ENCODE measurements at regions of chr19 and their contacts with region 1.

Region 1: GRCh38 chr19:15563325-15563794 is 51.7 kb upstream of the CYP4F8 start:
- DNase-seq: peak; percentile 52 to 70
- ATAC-seq: peak; percentile 100

Region 2: GRCh38 chr19:15081911-15082310 is 481.4 kb before region 1 on chr19 and contains the start of gene OR1I1:
- intact Hi-C with region 1: loop called in 1 of 2 experiments (anchors 10 kb)
- DNase-seq: no peak
- ATAC-seq: no peak
- total RNA-seq, gene OR1I1: not detected

Region 3: GRCh38 chr19:15595069-15595468 is 31.7 kb after region 1 on chr19:
- intact Hi-C with region 1: no loop called
- DNase-seq: no peak
- ATAC-seq: no peak

Measured in left colon (tissue), 2 donors.